ENCODE measurements at regions of chr3 and their contacts with region 1.

Region 1: GRCh38 chr3:72938471-72939265 is 50.8 kb downstream of the GXYLT2 start:
- DNase-seq: peak; percentile 66
- ATAC-seq: peak; percentile 92
- H3K4me3 ChIP-seq: no peak overlapping the region
- H3K27ac ChIP-seq: no peak overlapping the region
- H3K4me1 ChIP-seq: no peaks in the 10 kb centered on the region
- H3K27me3 ChIP-seq: no peaks in the 10 kb centered on the region
- CTCF ChIP-seq: peak; percentile 81

Region 2: DNA sequence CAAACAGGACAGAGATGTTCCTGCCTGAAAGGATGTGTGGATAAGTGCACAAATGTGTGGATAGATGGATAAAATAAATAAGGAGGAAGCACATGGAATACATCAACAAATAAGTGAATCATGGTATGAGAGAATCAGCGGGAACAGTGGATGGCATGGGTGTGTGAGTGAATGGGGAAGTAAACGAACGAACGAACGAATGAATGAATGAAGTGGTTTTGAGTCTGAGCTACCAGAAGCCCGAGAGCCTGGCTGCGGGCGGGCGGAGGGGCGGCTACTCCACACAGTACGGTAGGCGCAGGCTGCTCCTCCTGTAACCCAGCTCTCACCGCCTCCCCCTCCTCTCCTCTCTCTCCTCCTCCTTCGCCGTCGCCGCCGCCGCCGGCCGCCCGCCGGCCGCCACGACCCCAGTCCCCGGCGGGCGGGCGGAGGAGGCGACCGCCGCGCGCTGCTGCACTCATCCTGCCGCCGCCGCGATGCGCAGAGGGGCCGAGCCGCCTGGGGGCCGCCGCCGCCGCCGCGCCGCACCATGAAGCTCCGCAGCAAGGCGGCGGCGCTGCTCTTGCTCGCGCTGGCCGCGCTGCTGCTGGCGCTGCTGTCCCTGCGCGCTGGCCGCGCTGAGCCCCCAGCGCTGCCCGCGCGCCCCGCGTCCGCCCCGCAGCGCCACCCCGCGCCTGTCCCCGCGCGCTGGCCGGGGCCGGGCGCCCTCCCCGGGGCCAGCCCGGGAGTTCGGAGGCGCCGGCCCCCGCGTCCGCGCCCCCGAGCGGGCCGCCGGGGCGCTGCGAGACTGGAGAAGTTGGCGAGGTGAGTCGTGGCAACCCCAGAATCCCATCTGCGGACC is 50.7 kb before region 1 on chr3 and contains the start of gene GXYLT2:
- CTCF ChIA-PET with region 1: no interaction called
- POLR2A ChIA-PET with region 1: no interaction called
- intact Hi-C with region 1: loop called (anchors 5 kb)
- DNase-seq: peak; percentile 58
- ATAC-seq: peak; percentile 84
- H3K4me3 ChIP-seq: peak within 1 kb of the TSS; percentile 76
- H3K27ac ChIP-seq: no peak within 1 kb of the TSS
- H3K4me1 ChIP-seq: peaks cover 45% of the 10 kb centered on the region
- H3K27me3 ChIP-seq: no peaks in the 10 kb centered on the region
- CTCF ChIP-seq: no peak
- total RNA-seq, gene GXYLT2: 12.6 and 13.3 TPM in 2 replicates

Region 3: DNA sequence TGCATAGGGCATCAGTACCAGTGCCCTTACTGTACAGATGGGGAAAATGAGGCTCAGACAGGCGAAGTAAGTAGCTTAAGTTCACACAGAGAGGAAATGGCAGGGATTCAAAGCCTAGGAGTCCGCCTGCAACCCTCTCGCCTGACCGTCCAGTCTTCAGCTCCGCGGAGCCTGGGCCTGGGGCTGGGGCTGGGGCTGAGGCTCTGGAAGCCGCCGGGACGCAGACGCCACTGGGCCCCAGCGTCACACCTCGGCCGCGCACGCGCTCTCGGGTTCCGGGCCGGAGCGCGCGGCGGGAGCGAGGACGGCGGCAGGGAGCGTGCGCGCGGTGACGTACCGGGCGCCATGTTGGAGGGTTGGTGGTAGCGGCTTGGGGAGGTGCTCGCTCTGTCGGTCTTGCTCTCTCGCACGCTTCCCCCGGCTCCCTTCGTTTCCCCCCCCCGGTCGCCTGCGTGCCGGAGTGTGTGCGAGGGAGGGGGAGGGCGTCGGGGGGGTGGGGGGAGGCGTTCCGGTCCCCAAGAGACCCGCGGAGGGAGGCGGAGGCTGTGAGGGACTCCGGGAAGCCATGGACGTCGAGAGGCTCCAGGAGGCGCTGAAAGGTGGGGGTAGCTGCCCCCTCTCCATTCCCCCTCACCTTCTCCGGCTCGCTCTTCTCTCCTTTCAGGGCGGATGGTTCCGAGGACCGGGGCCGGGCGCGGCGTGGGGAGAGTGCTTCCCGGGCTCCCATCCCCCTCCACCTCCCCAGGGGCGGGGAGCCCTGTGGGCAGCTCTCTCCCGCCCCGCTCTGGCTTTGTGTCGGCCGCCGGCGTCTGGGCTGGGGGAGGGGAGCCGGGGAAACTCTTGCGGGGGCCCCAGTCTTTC is 58.0 kb after region 1 on chr3 and contains the start of gene PPP4R2:
- CTCF ChIA-PET with region 1: no interaction called
- POLR2A ChIA-PET with region 1: no interaction called
- intact Hi-C with region 1: loop called (anchors 2 kb)
- DNase-seq: peak; percentile 93
- ATAC-seq: peak; percentile 82
- H3K4me3 ChIP-seq: peak within 1 kb of the TSS; percentile 85
- H3K27ac ChIP-seq: peak within 1 kb of the TSS; percentile 75
- H3K4me1 ChIP-seq: peaks cover 28% of the 10 kb centered on the region
- H3K27me3 ChIP-seq: no peaks in the 10 kb centered on the region
- CTCF ChIP-seq: no peak
- total RNA-seq, gene PPP4R2: 40.5 and 62.7 TPM in 2 replicates

Region 4: GRCh38 chr3:73056014-73056844 is 117.6 kb after region 1 on chr3:
- CTCF ChIA-PET with region 1: interaction called, 8 read pairs
- POLR2A ChIA-PET with region 1: no interaction called
- intact Hi-C with region 1: loop called (anchors 1 kb)
- DNase-seq: peak; percentile 56
- ATAC-seq: peak; percentile 25; the same call in 1 of the 2 replicates
- H3K4me3 ChIP-seq: no peak overlapping the region
- H3K27ac ChIP-seq: no peak overlapping the region
- H3K4me1 ChIP-seq: peaks cover 14% of the 10 kb centered on the region
- H3K27me3 ChIP-seq: no peaks in the 10 kb centered on the region
- CTCF ChIP-seq: peak; percentile 78

Region 5: GRCh38 chr3:73070675-73071575 is 132.3 kb after region 1 on chr3:
- CTCF ChIA-PET with region 1: no interaction called
- POLR2A ChIA-PET with region 1: no interaction called
- intact Hi-C with region 1: loop called (anchors 5 kb)
- DNase-seq: no peak
- ATAC-seq: peak; percentile 14
- H3K4me3 ChIP-seq: no peak overlapping the region
- H3K27ac ChIP-seq: no peak overlapping the region
- H3K4me1 ChIP-seq: no peaks in the 10 kb centered on the region
- H3K27me3 ChIP-seq: no peaks in the 10 kb centered on the region
- CTCF ChIP-seq: no peak

Region 6: GRCh38 chr3:73086071-73086494 is 147.4 kb after region 1 on chr3:
- CTCF ChIA-PET with region 1: no interaction called
- POLR2A ChIA-PET with region 1: no interaction called
- intact Hi-C with region 1: loop called (anchors 1 kb)
- DNase-seq: peak; percentile 68
- ATAC-seq: peak; percentile 79
- H3K4me3 ChIP-seq: no peak overlapping the region
- H3K27ac ChIP-seq: no peak overlapping the region
- H3K4me1 ChIP-seq: no peaks in the 10 kb centered on the region
- H3K27me3 ChIP-seq: no peaks in the 10 kb centered on the region
- CTCF ChIP-seq: peak; percentile 93

Measured in PC-3 (cell line).